Activated B cell treated with CpG ODN at 0.5 μM for 24 hours (primary cell): ENCODE measurements at regions of chr1 and their contacts with region 1.

Region 1: GRCh38 chr1:172699111-172699510 is 40.2 kb downstream of the FASLG start:
- DNase-seq: no peak
- ATAC-seq: peak; percentile 68
- H3K4me3 Mint-ChIP-seq: peak overlapping the region; percentile 60
- H3K27ac Mint-ChIP-seq: peak overlapping the region; percentile 91
- H3K4me1 Mint-ChIP-seq: peaks cover 39% of the 10 kb centered on the region
- H3K27me3 Mint-ChIP-seq: no peaks in the 10 kb centered on the region
- CTCF ChIP-seq: no peak

Region 2: DNA sequence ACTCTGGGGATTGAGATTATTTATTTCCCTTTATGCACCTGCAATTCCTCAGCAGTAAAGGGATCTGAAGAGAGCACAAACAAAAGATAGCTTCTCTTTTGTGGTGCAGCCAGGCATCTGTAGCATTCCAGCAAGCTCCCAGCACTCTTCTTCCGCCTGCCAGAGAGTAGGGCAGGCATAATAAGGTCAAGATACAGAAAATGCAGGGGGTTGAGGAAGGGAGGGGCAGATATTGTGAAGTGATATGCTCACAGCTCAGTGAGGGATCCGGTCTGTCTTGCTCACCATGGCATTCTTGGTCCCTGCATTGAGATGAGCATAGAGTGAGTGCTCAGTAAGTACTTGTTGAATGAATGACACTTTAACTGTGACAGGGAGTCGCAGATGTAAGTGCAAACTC is 16.3 kb before region 1 on chr1:
- CTCF ChIA-PET with region 1: no interaction called
- POLR2A ChIA-PET with region 1: no interaction called
- intact Hi-C with region 1: loop called (anchors 1 kb)
- DNase-seq: no peak
- ATAC-seq: no peak
- H3K4me3 Mint-ChIP-seq: no peak overlapping the region
- H3K27ac Mint-ChIP-seq: no peak overlapping the region
- H3K4me1 Mint-ChIP-seq: no peaks in the 10 kb centered on the region
- H3K27me3 Mint-ChIP-seq: peaks cover 3% of the 10 kb centered on the region
- CTCF ChIP-seq: no peak